ENCODE measurements at regions of chr15 and their contacts with region 1.

Region 1: GRCh38 chr15:52227456-52227855 is 36.3 kb upstream of the GNB5 start:
- DNase-seq: peak; percentile 66
- ATAC-seq: peak; percentile 90
- H3K4me3 ChIP-seq: no peak overlapping the region
- H3K27ac ChIP-seq: no peak overlapping the region
- H3K4me1 ChIP-seq: peaks cover 36% of the 10 kb centered on the region
- H3K27me3 ChIP-seq: no peaks in the 10 kb centered on the region
- CTCF ChIP-seq: peak; percentile 79 to 87 (median 81)
- EP300 ChIP-seq: no peak
- POLR2A ChIP-seq: no peak
- RAD21 ChIP-seq: peak; percentile 79

Region 2: GRCh38 chr15:51971375-51972133 is 255.9 kb before region 1 on chr15 and contains the start of gene LEO1:
- CTCF ChIA-PET with region 1: interaction called, 4 read pairs
- POLR2A ChIA-PET with region 1: no interaction called
- RAD21 ChIA-PET with region 1: no interaction called
- SMC1A ChIA-PET with region 1: interaction called, 10 read pairs
- in situ Hi-C with region 1: loop called (anchors 5 kb)
- intact Hi-C with region 1: no loop called
- DNase-seq: peak; percentile 88
- ATAC-seq: peak; percentile 91
- H3K4me3 ChIP-seq: peak within 1 kb of the TSS; percentile 82
- H3K27ac ChIP-seq: peak within 1 kb of the TSS; percentile 83
- H3K4me1 ChIP-seq: no peaks in the 10 kb centered on the region
- H3K27me3 ChIP-seq: no peaks in the 10 kb centered on the region
- CTCF ChIP-seq: peak; percentile 18 to 42 (median 39); a peak in 4 of 6 replicates
- EP300 ChIP-seq: no peak
- POLR2A ChIP-seq: peak; percentile 94
- RAD21 ChIP-seq: 0 out of 2 replicates have a peak, but pooled peaks have one; percentile 0
- polyA plus RNA-seq, gene LEO1: 29.5 to 35.2 TPM

Region 3: DNA sequence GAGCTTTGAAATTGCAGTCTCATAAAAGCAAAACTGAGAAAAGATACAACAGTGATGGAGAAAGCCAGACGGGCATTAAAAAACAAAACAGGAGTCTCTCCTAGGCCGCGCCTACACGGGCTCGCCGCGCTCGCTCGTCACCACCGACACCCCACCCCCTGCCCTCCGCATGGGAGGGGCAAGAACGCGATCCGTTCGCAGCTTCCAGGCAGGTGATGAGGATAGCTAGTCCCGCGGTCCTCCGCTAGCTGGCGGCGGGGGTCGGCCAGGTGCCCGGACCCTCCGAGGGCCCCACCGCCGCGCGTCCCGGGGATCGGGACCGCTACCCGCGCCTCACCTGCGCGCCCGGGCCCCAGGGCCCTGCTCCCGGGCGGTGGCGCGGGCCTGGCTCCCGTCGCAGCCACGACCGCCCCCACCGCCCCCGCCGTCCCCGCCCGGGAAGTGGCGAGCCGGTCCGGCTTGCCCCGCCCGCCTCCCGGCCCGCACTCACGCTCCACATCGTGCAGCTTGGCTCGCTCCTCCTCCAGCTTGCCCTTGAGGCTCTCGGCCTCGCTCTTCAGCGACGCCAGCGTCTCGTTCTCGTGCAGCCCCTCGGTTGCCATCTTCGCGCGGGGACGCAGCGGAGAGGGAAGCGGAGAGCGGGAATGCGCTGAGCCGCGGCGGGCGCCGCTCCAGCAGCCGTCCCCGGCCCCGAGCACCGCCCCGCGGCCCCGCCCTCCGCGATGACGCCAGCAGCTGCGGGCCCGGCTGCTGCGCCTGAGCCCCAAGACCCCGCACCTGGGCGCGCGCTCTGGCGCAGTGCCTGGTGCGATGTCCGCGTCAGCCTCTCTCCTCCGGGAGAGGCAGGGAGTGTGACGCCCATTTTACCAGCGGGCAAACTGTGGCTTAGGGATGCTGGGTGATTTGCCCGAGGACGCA is 47.9 kb before region 1 on chr15:
- CTCF ChIA-PET with region 1: interaction called, 235 read pairs
- POLR2A ChIA-PET with region 1: interaction called, 3 read pairs
- RAD21 ChIA-PET with region 1: interaction called, 43 read pairs
- SMC1A ChIA-PET with region 1: interaction called, 93 read pairs
- in situ Hi-C with region 1: no loop called
- intact Hi-C with region 1: loop called (anchors 1 kb)
- DNase-seq: peak; percentile 37
- ATAC-seq: peak; percentile 87
- H3K4me3 ChIP-seq: peak overlapping the region; percentile 92
- H3K27ac ChIP-seq: peak overlapping the region; percentile 76
- H3K4me1 ChIP-seq: peaks cover 12% of the 10 kb centered on the region
- H3K27me3 ChIP-seq: no peaks in the 10 kb centered on the region
- CTCF ChIP-seq: no peak
- EP300 ChIP-seq: no peak
- POLR2A ChIP-seq: peak; percentile 89
- RAD21 ChIP-seq: no peak

Region 4: GRCh38 chr15:52208306-52208946 is 19.0 kb before region 1 on chr15:
- CTCF ChIA-PET with region 1: interaction called, 207 read pairs
- POLR2A ChIA-PET with region 1: no interaction called
- RAD21 ChIA-PET with region 1: interaction called, 16 read pairs
- SMC1A ChIA-PET with region 1: interaction called, 47 read pairs
- in situ Hi-C with region 1: no loop called
- intact Hi-C with region 1: no loop called
- DNase-seq: no peak
- ATAC-seq: peak; percentile 99
- H3K4me3 ChIP-seq: no peak overlapping the region
- H3K27ac ChIP-seq: no peak overlapping the region
- H3K4me1 ChIP-seq: no peaks in the 10 kb centered on the region
- H3K27me3 ChIP-seq: no peaks in the 10 kb centered on the region
- CTCF ChIP-seq: peak; percentile 84 to 89 (median 88)
- EP300 ChIP-seq: no peak
- POLR2A ChIP-seq: no peak
- RAD21 ChIP-seq: peak; percentile 71

Region 5: GRCh38 chr15:52261498-52262242 is 34.2 kb after region 1 on chr15:
- CTCF ChIA-PET with region 1: interaction called, 11 read pairs
- POLR2A ChIA-PET with region 1: no interaction called
- RAD21 ChIA-PET with region 1: interaction called, 11 read pairs
- SMC1A ChIA-PET with region 1: interaction called, 20 read pairs
- in situ Hi-C with region 1: no loop called
- intact Hi-C with region 1: no loop called
- DNase-seq: peak; percentile 86
- ATAC-seq: peak; percentile 100
- H3K4me3 ChIP-seq: no peak overlapping the region
- H3K27ac ChIP-seq: peak overlapping the region; percentile 95
- H3K4me1 ChIP-seq: peaks cover 24% of the 10 kb centered on the region
- H3K27me3 ChIP-seq: no peaks in the 10 kb centered on the region
- CTCF ChIP-seq: peak in 2 of 3 experiments; percentile 24 to 25; a peak in 1 of 6 replicates
- EP300 ChIP-seq: 0 out of 4 replicates have a peak, but pooled peaks have one; percentile 31 to 59
- POLR2A ChIP-seq: no peak; the same call in 1 of the 2 replicates
- RAD21 ChIP-seq: no peak

Region 6: DNA sequence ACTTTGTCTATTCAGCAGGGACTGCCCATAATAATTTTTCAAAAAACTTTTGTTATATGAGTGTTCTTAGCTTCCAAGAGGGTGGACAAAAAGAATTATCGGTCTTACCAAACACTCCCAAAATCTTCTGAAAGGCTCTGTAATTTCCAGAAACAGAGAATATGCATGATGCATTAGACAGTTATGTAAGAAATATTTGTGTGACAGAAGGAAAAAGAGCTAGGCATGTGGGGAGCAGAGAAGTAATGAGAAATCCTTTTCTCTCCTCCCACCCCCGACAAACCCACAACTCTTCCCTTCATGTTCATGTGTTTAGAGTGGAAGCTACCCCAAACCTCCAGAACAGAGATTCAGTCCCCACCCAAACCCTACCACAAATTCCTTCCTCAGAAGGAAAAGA is 214.4 kb after region 1 on chr15:
- CTCF ChIA-PET with region 1: no interaction called
- POLR2A ChIA-PET with region 1: no interaction called
- RAD21 ChIA-PET with region 1: no interaction called
- SMC1A ChIA-PET with region 1: no interaction called
- in situ Hi-C with region 1: no loop called
- intact Hi-C with region 1: no loop called
- DNase-seq: no peak
- ATAC-seq: no peak
- H3K4me3 ChIP-seq: no peak overlapping the region
- H3K27ac ChIP-seq: no peak overlapping the region
- H3K4me1 ChIP-seq: peaks cover 9% of the 10 kb centered on the region
- H3K27me3 ChIP-seq: no peaks in the 10 kb centered on the region
- CTCF ChIP-seq: no peak
- EP300 ChIP-seq: no peak
- POLR2A ChIP-seq: no peak
- RAD21 ChIP-seq: no peak